ENCODE measurements at regions of chr2 and their contacts with region 1.

Region 1: GRCh38 chr2:12716282-12717190 is at the start of gene TRIB2:
- DNase-seq: peak; percentile 98
- H3K4me3 ChIP-seq: peak within 1 kb of the TSS; percentile 76 to 90 (median 82)
- H3K27ac ChIP-seq: peak within 1 kb of the TSS; percentile 89 to 96 (median 94)
- H3K4me1 ChIP-seq: peaks cover 25 to 57% (median 49%) of the 10 kb centered on the region in 4 donors
- H3K27me3 ChIP-seq: no peaks in the 10 kb centered on the region
- CTCF ChIP-seq: no peak
- EP300 ChIP-seq: no peak
- POLR2A ChIP-seq: peak; percentile 21
- total RNA-seq, gene TRIB2: 31.5 to 52.3 (median 39.2) TPM

Region 2: GRCh38 chr2:11863513-11864328 is 852.8 kb before region 1 on chr2:
- intact Hi-C with region 1: loop called (anchors 2 kb)
- DNase-seq: peak; percentile 94
- H3K4me3 ChIP-seq: peak overlapping the region in 3 of 4 donors; percentile 10 to 29 (median 21)
- H3K27ac ChIP-seq: peak overlapping the region; percentile 13 to 42 (median 34)
- H3K4me1 ChIP-seq: peaks cover 13 to 19% (median 15%) of the 10 kb centered on the region in 4 donors
- H3K27me3 ChIP-seq: no peaks in the 10 kb centered on the region
- CTCF ChIP-seq: peak in 2 of 3 experiments; percentile 92 to 97
- EP300 ChIP-seq: no peak
- POLR2A ChIP-seq: no peak

Region 3: DNA sequence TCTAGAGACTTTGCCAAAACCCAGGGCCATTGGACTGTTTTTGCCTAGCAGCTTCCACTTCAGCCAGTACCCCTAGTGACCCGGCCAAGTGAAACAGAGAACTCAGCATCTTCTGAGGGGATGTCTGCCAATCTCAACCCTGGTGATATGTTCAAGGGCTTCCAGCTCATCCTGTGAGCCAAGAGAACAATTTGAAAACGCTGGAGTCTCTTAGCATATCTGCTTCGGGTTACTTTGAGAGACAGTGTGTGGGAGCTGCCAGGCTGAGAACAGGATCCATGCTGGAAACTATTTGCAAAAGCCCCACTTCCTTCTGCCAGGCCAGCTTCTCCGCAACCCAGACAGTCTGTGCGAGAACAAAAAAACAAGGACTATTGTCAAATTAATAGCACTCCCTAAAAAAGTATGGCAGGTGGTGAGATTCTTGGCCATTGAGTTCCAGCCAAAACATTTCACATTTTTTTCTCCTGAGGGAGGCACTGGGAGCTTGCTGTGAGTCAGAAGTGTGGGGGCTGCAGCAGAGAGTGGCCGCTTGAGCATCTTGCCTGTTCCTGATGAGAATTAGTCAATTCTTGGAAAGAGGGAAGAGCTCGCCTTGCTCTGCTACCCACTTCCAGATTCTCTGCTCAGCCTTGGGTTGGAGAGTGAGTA is 395.4 kb before region 1 on chr2:
- intact Hi-C with region 1: loop called (anchors 5 kb)
- DNase-seq: no peak
- H3K4me3 ChIP-seq: no peak overlapping the region
- H3K27ac ChIP-seq: peak overlapping the region in 2 of 4 donors; percentile 47 to 59
- H3K4me1 ChIP-seq: peaks cover 6 to 39% (median 17%) of the 10 kb centered on the region in 4 donors
- H3K27me3 ChIP-seq: no peaks in the 10 kb centered on the region
- CTCF ChIP-seq: peak in 1 of 3 experiments; percentile 7
- EP300 ChIP-seq: no peak
- POLR2A ChIP-seq: no peak

Region 4: GRCh38 chr2:12456293-12457151 is 260.0 kb before region 1 on chr2:
- intact Hi-C with region 1: loop called (anchors 10 kb)
- DNase-seq: peak; percentile 97
- H3K4me3 ChIP-seq: peak overlapping the region in 3 of 4 donors; percentile 5 to 28 (median 18)
- H3K27ac ChIP-seq: peak overlapping the region; percentile 67 to 78 (median 76)
- H3K4me1 ChIP-seq: peaks cover 21 to 62% (median 26%) of the 10 kb centered on the region in 4 donors
- H3K27me3 ChIP-seq: no peaks in the 10 kb centered on the region
- CTCF ChIP-seq: peak in 1 of 3 experiments; percentile 10
- EP300 ChIP-seq: peak; percentile 51
- POLR2A ChIP-seq: no peak

Region 5: GRCh38 chr2:12733846-12734245 is 17.3 kb after region 1 on chr2:
- intact Hi-C with region 1: no loop called
- DNase-seq: no peak
- H3K4me3 ChIP-seq: no peak overlapping the region
- H3K27ac ChIP-seq: peak overlapping the region; percentile 19 to 57 (median 30)
- H3K4me1 ChIP-seq: peaks cover 41 to 74% (median 49%) of the 10 kb centered on the region in 4 donors
- H3K27me3 ChIP-seq: no peaks in the 10 kb centered on the region
- CTCF ChIP-seq: no peak
- EP300 ChIP-seq: no peak
- POLR2A ChIP-seq: no peak

Region 6: GRCh38 chr2:12965540-12966269 is 249.2 kb after region 1 on chr2:
- intact Hi-C with region 1: no loop called
- DNase-seq: no peak
- H3K4me3 ChIP-seq: no peak overlapping the region
- H3K27ac ChIP-seq: no peak overlapping the region
- H3K4me1 ChIP-seq: peaks cover 5 to 11% (median 9%) of the 10 kb centered on the region in 4 donors
- H3K27me3 ChIP-seq: no peaks in the 10 kb centered on the region
- CTCF ChIP-seq: no peak
- EP300 ChIP-seq: no peak
- POLR2A ChIP-seq: no peak

Region 7: GRCh38 chr2:13006829-13007717 is 290.5 kb after region 1 on chr2:
- intact Hi-C with region 1: loop called (anchors 5 kb)
- DNase-seq: no peak
- H3K4me3 ChIP-seq: peak overlapping the region in 2 of 4 donors; percentile 25 to 38
- H3K27ac ChIP-seq: no peak overlapping the region
- H3K4me1 ChIP-seq: peaks cover 6 to 23% (median 21%) of the 10 kb centered on the region in 4 donors
- H3K27me3 ChIP-seq: no peaks in the 10 kb centered on the region
- CTCF ChIP-seq: peak; percentile 81 to 94 (median 85)
- EP300 ChIP-seq: no peak
- POLR2A ChIP-seq: no peak